ENCODE measurements at regions of chr2 and their contacts with region 1.

Region 1: GRCh38 chr2:96320728-96321622 is 4.1 kb upstream of the ITPRIPL1 start:
- DNase-seq: peak; percentile 52
- H3K4me3 Mint-ChIP-seq: peak overlapping the region; percentile 91
- H3K27ac Mint-ChIP-seq: peak overlapping the region; percentile 91
- H3K4me1 Mint-ChIP-seq: peaks cover 59% of the 10 kb centered on the region
- H3K27me3 Mint-ChIP-seq: no peaks in the 10 kb centered on the region

Region 2: DNA sequence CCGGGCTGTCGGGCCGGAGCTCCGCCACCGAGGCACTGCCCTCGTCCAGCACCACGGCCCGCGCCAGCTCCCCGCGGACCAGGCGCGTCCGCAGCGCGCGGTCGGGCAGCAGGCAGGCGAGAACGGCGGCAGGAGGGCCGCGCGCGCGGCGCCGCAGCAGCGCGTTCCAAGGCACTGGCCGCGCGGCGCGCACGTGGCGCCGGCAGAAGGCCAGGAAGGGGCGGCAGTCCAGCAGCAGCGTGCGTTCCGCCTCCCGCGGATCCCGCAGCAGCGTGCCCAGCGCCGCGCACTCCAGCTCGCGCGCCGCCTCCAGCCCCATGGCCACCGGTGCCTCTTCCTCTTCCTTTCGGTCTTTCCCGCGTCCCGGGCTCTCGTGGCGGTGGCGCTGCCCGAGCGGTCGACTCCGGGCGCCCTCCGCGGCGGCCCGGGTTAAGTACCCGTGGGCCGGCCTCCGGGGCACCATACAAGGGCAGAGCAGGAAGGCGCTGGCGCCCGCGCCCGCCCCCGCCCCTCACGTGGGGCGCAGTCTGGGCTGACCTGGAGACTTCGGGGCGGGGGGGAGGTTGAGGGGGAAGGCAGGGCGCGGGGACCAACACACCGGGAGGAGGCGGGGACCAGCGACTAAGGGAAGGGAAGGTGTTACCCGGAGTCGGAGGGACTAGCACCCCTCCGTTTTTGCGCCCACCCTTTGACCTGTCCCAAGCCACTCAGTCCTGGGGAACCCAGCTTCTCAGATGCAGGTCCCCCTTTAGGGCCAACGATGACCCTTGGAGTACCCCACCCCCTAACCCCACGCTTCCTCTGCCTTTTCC is 175.7 kb before region 1 on chr2 and contains the start of gene DUSP2:
- CTCF ChIA-PET with region 1: no interaction called
- POLR2A ChIA-PET with region 1: no interaction called
- intact Hi-C with region 1: loop called (anchors 5 kb)
- DNase-seq: peak; percentile 96
- H3K4me3 Mint-ChIP-seq: peak within 1 kb of the TSS; percentile 96
- H3K27ac Mint-ChIP-seq: peak within 1 kb of the TSS; percentile 100
- H3K4me1 Mint-ChIP-seq: peaks cover 57% of the 10 kb centered on the region
- H3K27me3 Mint-ChIP-seq: peaks cover 4% of the 10 kb centered on the region
- total RNA-seq, gene DUSP2: 522 to 539 TPM

Region 3: GRCh38 chr2:96208143-96209010 is 112.6 kb before region 1 on chr2 and contains the start of gene STARD7:
- CTCF ChIA-PET with region 1: no interaction called
- POLR2A ChIA-PET with region 1: interaction called, 9 read pairs
- intact Hi-C with region 1: loop called (anchors 5 kb)
- DNase-seq: peak; percentile 99
- H3K4me3 Mint-ChIP-seq: peak within 1 kb of the TSS; percentile 98
- H3K27ac Mint-ChIP-seq: peak within 1 kb of the TSS; percentile 92
- H3K4me1 Mint-ChIP-seq: peaks cover 53% of the 10 kb centered on the region
- H3K27me3 Mint-ChIP-seq: no peaks in the 10 kb centered on the region
- total RNA-seq, gene STARD7: 173 to 181 TPM

Region 4: DNA sequence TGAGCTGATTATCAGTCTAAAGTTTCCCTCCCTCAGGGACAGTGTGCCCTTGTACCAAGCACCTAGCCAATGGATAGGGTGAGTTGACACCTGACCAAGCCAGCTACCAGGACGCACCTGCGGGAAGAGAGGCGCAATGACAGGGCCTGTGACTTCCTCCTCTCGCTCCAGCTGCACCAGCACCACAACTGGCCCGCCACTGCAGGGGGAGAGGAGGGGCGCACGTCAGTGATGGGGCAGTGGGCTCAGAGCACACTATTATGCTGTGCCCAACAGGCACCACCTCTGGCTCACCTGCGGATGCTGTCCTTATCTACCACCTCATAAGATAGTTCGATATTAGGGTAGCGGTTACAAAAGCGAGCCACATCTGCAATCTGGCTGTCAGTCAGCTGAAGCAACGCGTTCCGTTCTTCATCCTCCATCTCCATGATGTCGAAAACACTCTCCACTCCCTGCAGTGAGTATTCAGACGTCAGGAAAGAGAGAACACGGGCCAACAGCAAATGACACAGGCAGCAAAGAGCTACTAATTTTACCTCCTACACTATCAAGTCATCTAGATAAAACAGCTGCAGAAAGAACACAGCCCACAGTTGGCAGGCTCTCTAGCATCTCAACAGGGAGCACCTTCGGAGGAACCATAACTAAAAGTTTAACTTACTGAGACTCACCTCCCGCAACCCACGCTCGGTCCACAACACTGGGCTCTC is 44.0 kb before region 1 on chr2:
- CTCF ChIA-PET with region 1: no interaction called
- POLR2A ChIA-PET with region 1: no interaction called
- intact Hi-C with region 1: no loop called
- DNase-seq: no peak
- H3K4me3 Mint-ChIP-seq: no peak overlapping the region
- H3K27ac Mint-ChIP-seq: no peak overlapping the region
- H3K4me1 Mint-ChIP-seq: no peaks in the 10 kb centered on the region
- H3K27me3 Mint-ChIP-seq: no peaks in the 10 kb centered on the region

Region 5: GRCh38 chr2:96305091-96305978 is 15.6 kb before region 1 on chr2 and contains the start of gene SNRNP200:
- CTCF ChIA-PET with region 1: interaction called, 8 read pairs
- POLR2A ChIA-PET with region 1: interaction called, 28 read pairs
- intact Hi-C with region 1: loop called (anchors 1 kb)
- DNase-seq: peak; percentile 94
- H3K4me3 Mint-ChIP-seq: peak within 1 kb of the TSS; percentile 99
- H3K27ac Mint-ChIP-seq: peak within 1 kb of the TSS; percentile 97
- H3K4me1 Mint-ChIP-seq: peaks cover 47% of the 10 kb centered on the region
- H3K27me3 Mint-ChIP-seq: no peaks in the 10 kb centered on the region
- total RNA-seq, gene SNRNP200: 165 to 175 TPM

Region 6: GRCh38 chr2:96344011-96344410 is 23.0 kb after region 1 on chr2:
- CTCF ChIA-PET with region 1: interaction called, 19 read pairs
- POLR2A ChIA-PET with region 1: interaction called, 36 read pairs
- intact Hi-C with region 1: loop called (anchors 1 kb)
- DNase-seq: peak; percentile 77
- H3K4me3 Mint-ChIP-seq: no peak overlapping the region
- H3K27ac Mint-ChIP-seq: peak overlapping the region; percentile 87
- H3K4me1 Mint-ChIP-seq: peaks cover 67% of the 10 kb centered on the region
- H3K27me3 Mint-ChIP-seq: no peaks in the 10 kb centered on the region

Region 7: DNA sequence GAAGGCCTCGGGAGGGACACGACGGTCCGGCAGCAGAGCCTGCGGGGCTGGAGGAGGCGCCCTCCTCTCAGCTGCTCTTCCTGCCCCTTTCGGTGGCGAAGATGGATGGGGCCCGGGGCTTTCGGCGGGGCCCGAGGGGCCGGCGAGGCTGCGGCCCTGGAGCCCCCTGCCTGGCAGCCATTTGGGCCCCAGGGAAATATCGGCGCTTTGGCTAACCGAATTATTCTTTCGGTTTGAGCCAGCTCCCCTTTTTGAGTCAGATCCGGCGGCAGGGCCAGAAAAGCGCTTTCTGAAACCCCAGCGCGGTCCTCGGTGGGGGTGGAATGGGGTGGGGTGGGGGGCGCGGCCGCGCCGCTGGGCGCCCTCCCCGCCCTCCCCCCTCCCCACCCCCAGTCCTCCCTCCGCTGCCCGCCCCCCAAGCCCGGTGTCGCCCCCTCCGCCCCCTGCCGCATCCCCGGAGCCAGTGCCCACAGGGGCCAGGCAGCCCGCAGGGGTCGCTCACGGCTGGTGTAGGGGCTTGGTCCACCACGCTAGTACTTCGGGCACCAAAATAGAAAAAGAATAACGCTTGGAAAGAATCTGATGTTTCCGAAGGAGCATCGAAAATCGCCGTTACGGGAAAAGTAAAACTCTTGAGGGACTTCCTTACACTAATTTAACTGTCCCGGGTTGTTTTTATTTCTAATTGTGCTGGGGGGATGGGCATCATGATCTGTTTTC is 206.5 kb after region 1 on chr2:
- CTCF ChIA-PET with region 1: no interaction called
- POLR2A ChIA-PET with region 1: interaction called, 3 read pairs
- intact Hi-C with region 1: loop called (anchors 5 kb)
- DNase-seq: peak; percentile 89
- H3K4me3 Mint-ChIP-seq: peak overlapping the region; percentile 73
- H3K27ac Mint-ChIP-seq: peak overlapping the region; percentile 98
- H3K4me1 Mint-ChIP-seq: peaks cover 96% of the 10 kb centered on the region
- H3K27me3 Mint-ChIP-seq: no peaks in the 10 kb centered on the region